ENCODE measurements at regions of chr11 and their contacts with region 1.

Region 1: GRCh38 chr11:123707606-123708205 is 33.8 kb downstream of the ZNF202 start:
- DNase-seq: peak; percentile 75
- H3K4me3 ChIP-seq: no peak overlapping the region
- H3K27ac ChIP-seq: no peak overlapping the region
- H3K4me1 ChIP-seq: no peaks in the 10 kb centered on the region
- H3K27me3 ChIP-seq: no peaks in the 10 kb centered on the region
- CTCF ChIP-seq: peak; percentile 61 to 69
- POLR2A ChIP-seq: no peak

Region 2: GRCh38 chr11:123511037-123511870 is 196.5 kb before region 1 on chr11:
- CTCF ChIA-PET with region 1: interaction called, 11 read pairs
- POLR2A ChIA-PET with region 1: no interaction called
- dilution Hi-C with region 1: no loop called
- intact Hi-C with region 1: loop called (anchors 1 kb)
- DNase-seq: peak; percentile 83
- H3K4me3 ChIP-seq: no peak overlapping the region
- H3K27ac ChIP-seq: no peak overlapping the region
- H3K4me1 ChIP-seq: peaks cover 8% of the 10 kb centered on the region
- H3K27me3 ChIP-seq: no peaks in the 10 kb centered on the region
- CTCF ChIP-seq: peak; percentile 93 to 97
- POLR2A ChIP-seq: no peak

Region 3: GRCh38 chr11:123580557-123581275 is 127.0 kb before region 1 on chr11:
- CTCF ChIA-PET with region 1: interaction called, 117 read pairs
- POLR2A ChIA-PET with region 1: no interaction called
- dilution Hi-C with region 1: no loop called
- intact Hi-C with region 1: loop called (anchors 1 kb)
- DNase-seq: peak; percentile 49
- H3K4me3 ChIP-seq: no peak overlapping the region
- H3K27ac ChIP-seq: no peak overlapping the region
- H3K4me1 ChIP-seq: peaks cover 5% of the 10 kb centered on the region
- H3K27me3 ChIP-seq: peaks cover 2 to 4% of the 10 kb centered on the region in 2 experiments
- CTCF ChIP-seq: peak; percentile 91 to 98
- POLR2A ChIP-seq: no peak

Region 4: GRCh38 chr11:123628936-123629683 is 78.6 kb before region 1 on chr11:
- CTCF ChIA-PET with region 1: interaction called, 11 read pairs
- POLR2A ChIA-PET with region 1: no interaction called
- dilution Hi-C with region 1: no loop called
- intact Hi-C with region 1: no loop called
- DNase-seq: peak; percentile 91
- H3K4me3 ChIP-seq: no peak overlapping the region
- H3K27ac ChIP-seq: peak overlapping the region; percentile 13
- H3K4me1 ChIP-seq: peaks cover 5% of the 10 kb centered on the region
- H3K27me3 ChIP-seq: no peaks in the 10 kb centered on the region
- CTCF ChIP-seq: no peak
- POLR2A ChIP-seq: no peak

Region 5: DNA sequence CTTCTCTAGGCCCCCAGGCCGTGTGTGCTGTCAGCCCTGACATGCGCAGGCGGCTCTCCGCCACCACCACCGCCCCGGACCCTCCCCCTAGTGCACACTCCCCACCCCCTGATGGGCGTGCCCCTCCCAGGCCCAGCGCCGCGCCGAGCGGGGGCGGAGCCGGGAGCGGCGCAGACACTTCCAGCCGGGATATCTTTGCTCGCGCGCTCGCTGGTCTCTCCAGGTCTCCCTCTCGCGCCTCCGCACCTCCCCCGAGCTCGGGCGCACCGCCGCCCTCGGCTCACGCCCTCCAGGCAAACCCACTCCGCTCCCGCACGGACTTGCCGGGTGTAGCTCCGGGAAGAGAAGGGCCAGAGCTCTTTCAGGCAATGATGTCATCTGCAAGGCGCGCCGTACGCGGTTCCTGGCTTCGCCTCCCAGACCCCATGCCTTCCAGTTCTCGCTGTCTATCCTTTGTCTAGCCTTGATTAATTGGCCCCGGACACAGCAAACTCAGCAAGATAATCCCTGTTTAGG is 53.1 kb before region 1 on chr11 and contains the start of gene SCN3B:
- CTCF ChIA-PET with region 1: interaction called, 41 read pairs
- POLR2A ChIA-PET with region 1: no interaction called
- dilution Hi-C with region 1: no loop called
- intact Hi-C with region 1: no loop called
- DNase-seq: peak; percentile 84
- H3K4me3 ChIP-seq: peak within 1 kb of the TSS; percentile 58 to 67 (median 59)
- H3K27ac ChIP-seq: no peak within 1 kb of the TSS
- H3K4me1 ChIP-seq: peaks cover 6% of the 10 kb centered on the region
- H3K27me3 ChIP-seq: peaks cover 12 to 16% of the 10 kb centered on the region in 2 experiments
- CTCF ChIP-seq: no peak
- POLR2A ChIP-seq: no peak
- total RNA-seq, gene SCN3B: 1.4 and 1.5 TPM in 2 replicates

Region 6: DNA sequence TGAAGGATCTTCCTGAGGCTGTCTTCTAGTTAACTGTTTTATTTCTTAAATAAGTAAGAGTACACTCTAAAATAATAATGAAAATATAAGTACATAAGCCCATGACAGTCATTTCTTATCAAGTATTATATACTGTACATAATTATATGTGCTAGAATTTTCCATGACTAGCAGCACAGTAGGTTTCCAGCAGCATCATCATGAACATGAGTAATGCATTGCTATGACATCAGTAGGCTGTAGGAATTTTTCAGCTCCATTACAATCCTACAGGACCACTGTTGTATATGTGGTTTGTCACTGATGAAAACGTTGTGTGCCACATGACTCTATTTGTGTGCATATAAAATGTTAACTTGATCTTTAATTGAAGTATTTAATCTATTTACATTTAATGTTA is 11.7 kb after region 1 on chr11:
- CTCF ChIA-PET with region 1: interaction called, 44 read pairs
- POLR2A ChIA-PET with region 1: no interaction called
- dilution Hi-C with region 1: no loop called
- intact Hi-C with region 1: no loop called
- DNase-seq: no peak
- H3K4me3 ChIP-seq: no peak overlapping the region
- H3K27ac ChIP-seq: no peak overlapping the region
- H3K4me1 ChIP-seq: no peaks in the 10 kb centered on the region
- H3K27me3 ChIP-seq: peaks cover under 1 to 5% of the 10 kb centered on the region in 2 experiments
- CTCF ChIP-seq: no peak
- POLR2A ChIP-seq: no peak

Region 7: GRCh38 chr11:124256076-124256475 is 548.4 kb after region 1 on chr11 and contains the start of gene OR8G5:
- CTCF ChIA-PET with region 1: no interaction called
- POLR2A ChIA-PET with region 1: no interaction called
- dilution Hi-C with region 1: no loop called
- intact Hi-C with region 1: no loop called
- DNase-seq: no peak
- H3K4me3 ChIP-seq: no peak within 1 kb of the TSS
- H3K27ac ChIP-seq: no peak within 1 kb of the TSS
- H3K4me1 ChIP-seq: no peaks in the 10 kb centered on the region
- H3K27me3 ChIP-seq: peaks cover 2% of the 10 kb centered on the region in 2 experiments
- CTCF ChIP-seq: no peak
- POLR2A ChIP-seq: no peak
- total RNA-seq, gene OR8G5: not detected in 2 replicates

Measured in endothelial cell of umbilical vein (primary cell).